ENCODE measurements at regions of chr18 and their contacts with region 1.

Region 1: DNA sequence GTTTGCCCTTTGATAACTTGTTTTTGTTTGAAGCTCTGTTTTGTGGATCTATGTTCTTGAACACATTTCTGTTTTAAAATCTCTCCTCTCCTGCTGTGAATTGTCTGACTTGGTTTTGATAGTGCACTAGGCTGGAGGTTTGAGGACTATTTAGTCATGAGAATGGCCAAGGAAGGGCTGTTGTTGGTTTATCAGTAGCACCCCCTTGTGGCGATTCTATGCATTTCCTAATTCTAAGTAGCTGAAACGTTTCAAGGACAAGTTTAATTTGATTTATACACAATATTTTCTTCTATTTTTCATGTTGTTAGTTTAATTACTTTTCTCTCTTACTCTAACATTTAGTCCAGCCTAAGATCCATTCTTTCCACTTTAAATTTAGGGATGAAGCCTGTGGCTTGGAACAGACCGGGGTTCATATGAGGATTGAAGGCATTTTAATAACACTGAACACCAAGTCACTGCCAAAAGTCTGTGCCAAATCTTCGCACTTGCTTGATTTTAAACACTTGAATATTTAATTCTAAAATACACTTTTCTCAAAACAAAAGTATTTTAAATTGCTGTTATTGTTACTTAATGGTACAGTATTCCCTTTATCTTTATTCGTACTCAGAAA is 166.0 kb downstream of the SOCS6 start:
- DNase-seq: no peak
- H3K4me3 ChIP-seq: no peak overlapping the region
- H3K27me3 ChIP-seq: no peaks in the 10 kb centered on the region
- CTCF ChIP-seq: peak; percentile 77

Region 2: GRCh38 chr18:70172225-70172624 is 282.6 kb before region 1 on chr18:
- CTCF ChIA-PET with region 1: interaction called, 26 read pairs
- POLR2A ChIA-PET with region 1: no interaction called
- DNase-seq: no peak
- H3K4me3 ChIP-seq: no peak overlapping the region
- H3K27me3 ChIP-seq: no peaks in the 10 kb centered on the region
- CTCF ChIP-seq: peak; percentile 44

Region 3: GRCh38 chr18:70188113-70188512 is 266.7 kb before region 1 on chr18:
- CTCF ChIA-PET with region 1: interaction called, 121 read pairs
- POLR2A ChIA-PET with region 1: no interaction called
- DNase-seq: no peak
- H3K4me3 ChIP-seq: no peak overlapping the region
- H3K27me3 ChIP-seq: no peaks in the 10 kb centered on the region
- CTCF ChIP-seq: no peak

Region 4: DNA sequence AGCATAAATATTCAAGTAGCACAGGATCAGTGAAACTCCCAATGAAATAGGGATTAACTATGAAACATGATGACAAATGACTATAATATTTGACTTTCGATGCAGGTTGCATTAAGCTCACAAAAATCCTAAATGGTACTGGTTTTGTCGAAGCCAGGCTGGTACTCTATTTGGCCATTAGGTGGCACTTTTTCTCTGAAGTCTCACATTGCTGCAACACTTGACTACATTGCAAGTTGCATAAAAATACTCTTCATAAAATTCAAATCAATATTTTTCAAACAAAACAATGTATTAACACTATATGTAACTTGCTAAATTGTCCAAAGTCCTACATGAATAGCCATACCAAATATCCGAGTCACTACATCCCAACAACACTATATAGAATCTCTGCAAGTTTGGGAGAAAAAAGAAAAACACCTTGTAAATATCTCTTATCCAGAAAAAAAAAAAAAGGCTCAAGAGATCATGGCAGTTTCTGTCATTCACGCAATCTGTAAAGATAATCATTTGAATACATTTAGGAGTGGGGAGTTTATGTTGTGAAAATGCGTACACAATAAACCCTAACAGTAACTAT is 258.9 kb before region 1 on chr18:
- CTCF ChIA-PET with region 1: interaction called, 121 read pairs
- POLR2A ChIA-PET with region 1: no interaction called
- DNase-seq: no peak
- H3K4me3 ChIP-seq: no peak overlapping the region
- H3K27me3 ChIP-seq: no peaks in the 10 kb centered on the region
- CTCF ChIP-seq: peak; percentile 81

Region 5: DNA sequence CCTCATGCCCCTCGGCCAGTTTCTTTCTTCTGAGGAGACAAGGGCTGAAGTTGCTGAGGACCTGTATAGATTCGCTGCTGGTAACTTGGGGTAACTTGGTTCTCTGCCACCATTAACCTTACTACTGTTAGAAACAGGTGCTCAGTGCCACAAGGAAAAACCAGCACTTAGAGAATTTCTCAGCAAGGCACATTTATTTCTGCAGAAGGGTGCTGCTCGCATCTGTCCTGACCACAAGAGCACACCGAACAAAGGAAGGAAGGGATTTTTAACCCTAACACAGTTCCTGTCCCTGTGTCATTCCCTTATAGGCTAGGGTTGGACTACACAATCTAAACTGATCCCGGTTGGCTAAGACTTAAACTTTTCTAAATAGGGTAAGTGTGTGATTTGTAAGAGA is 11.9 kb before region 1 on chr18:
- CTCF ChIA-PET with region 1: interaction called, 14 read pairs
- POLR2A ChIA-PET with region 1: no interaction called
- DNase-seq: no peak
- H3K4me3 ChIP-seq: no peak overlapping the region
- H3K27me3 ChIP-seq: no peaks in the 10 kb centered on the region
- CTCF ChIP-seq: no peak